ENCODE measurements at regions of chr9 and their contacts with region 1.

Region 1: GRCh38 chr9:20622330-20623020 is at the start of gene MLLT3:
- DNase-seq: peak; percentile 88
- ATAC-seq: peak; percentile 70
- H3K4me3 ChIP-seq: peak within 1 kb of the TSS; percentile 87
- H3K27ac ChIP-seq: peak within 1 kb of the TSS; percentile 45
- H3K4me1 ChIP-seq: peaks cover 26% of the 10 kb centered on the region
- H3K27me3 ChIP-seq: no peaks in the 10 kb centered on the region
- CTCF ChIP-seq: no peak
- total RNA-seq, gene MLLT3: 6.4 and 7.1 TPM in 2 replicates

Region 2: GRCh38 chr9:19925817-19926503 is 696.5 kb before region 1 on chr9:
- CTCF ChIA-PET with region 1: no interaction called
- POLR2A ChIA-PET with region 1: no interaction called
- intact Hi-C with region 1: loop called (anchors 5 kb)
- DNase-seq: peak; percentile 83
- ATAC-seq: peak; percentile 89
- H3K4me3 ChIP-seq: peak overlapping the region; percentile 44; the same call in 1 of the 2 replicates
- H3K27ac ChIP-seq: no peak overlapping the region
- H3K4me1 ChIP-seq: no peaks in the 10 kb centered on the region
- H3K27me3 ChIP-seq: no peaks in the 10 kb centered on the region
- CTCF ChIP-seq: peak; percentile 86

Region 3: DNA sequence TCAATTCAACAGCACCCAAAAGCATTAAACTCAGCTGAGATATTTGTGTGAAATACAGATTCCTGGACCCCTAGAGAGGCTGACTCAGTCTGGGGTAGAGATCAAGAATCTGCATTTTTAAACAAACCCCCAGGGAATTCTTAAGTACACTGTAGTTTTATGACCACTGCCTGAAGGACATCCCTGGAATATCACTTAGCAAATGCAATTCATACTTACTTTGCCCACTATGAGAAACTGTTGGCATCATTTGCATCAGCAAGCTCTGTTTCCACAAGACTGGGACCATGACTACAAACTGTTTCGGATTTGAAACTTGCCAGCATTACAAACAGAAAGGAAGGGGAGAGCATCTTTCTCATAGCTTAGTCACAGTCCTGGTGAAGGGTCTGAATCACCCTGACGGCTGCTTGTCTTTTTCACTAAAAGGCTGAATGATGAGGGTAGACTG is 63.9 kb before region 1 on chr9:
- CTCF ChIA-PET with region 1: no interaction called
- POLR2A ChIA-PET with region 1: interaction called, 16 read pairs
- intact Hi-C with region 1: loop called (anchors 2 kb)
- DNase-seq: peak; percentile 85
- ATAC-seq: peak; percentile 87
- H3K4me3 ChIP-seq: 0 out of 2 replicates have a peak overlapping the region, but pooled peaks have one; percentile 13
- H3K27ac ChIP-seq: peak overlapping the region; percentile 84
- H3K4me1 ChIP-seq: peaks cover 34% of the 10 kb centered on the region
- H3K27me3 ChIP-seq: no peaks in the 10 kb centered on the region
- CTCF ChIP-seq: no peak

Region 4: GRCh38 chr9:20684035-20684872 is 61.8 kb after region 1 on chr9 and contains the start of gene FOCAD:
- CTCF ChIA-PET with region 1: no interaction called
- POLR2A ChIA-PET with region 1: interaction called, 5 read pairs
- intact Hi-C with region 1: loop called (anchors 1 kb)
- DNase-seq: peak; percentile 93
- ATAC-seq: peak; percentile 98
- H3K4me3 ChIP-seq: peak within 1 kb of the TSS; percentile 92
- H3K27ac ChIP-seq: peak within 1 kb of the TSS; percentile 89
- H3K4me1 ChIP-seq: peaks cover 23% of the 10 kb centered on the region
- H3K27me3 ChIP-seq: no peaks in the 10 kb centered on the region
- CTCF ChIP-seq: no peak
- total RNA-seq, gene FOCAD: 35.1 and 38.4 TPM in 2 replicates

Region 5: DNA sequence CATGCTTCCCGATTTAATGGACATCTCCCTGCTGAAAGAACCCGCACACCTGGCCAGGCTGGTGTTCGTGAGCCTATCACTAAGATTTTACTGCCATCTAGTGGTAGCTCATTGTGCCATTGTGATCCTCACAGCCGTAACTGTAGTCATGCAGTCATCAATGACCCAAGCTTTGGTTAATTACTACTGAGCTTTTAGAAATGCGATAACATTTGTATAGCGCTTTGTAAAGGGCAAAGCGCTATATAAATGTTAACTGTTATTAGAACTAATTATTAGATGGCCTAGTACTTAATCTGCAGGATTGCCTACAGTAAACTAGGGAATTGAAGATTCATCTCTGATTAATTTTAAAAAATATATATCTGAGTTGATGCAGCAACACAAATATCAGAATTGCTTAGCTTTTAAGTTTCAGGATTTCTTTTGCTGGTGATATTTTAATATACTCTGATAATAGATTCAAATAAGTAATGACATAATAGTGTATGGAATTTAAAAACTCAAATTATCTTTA is 318.8 kb after region 1 on chr9:
- CTCF ChIA-PET with region 1: interaction called, 5 read pairs
- POLR2A ChIA-PET with region 1: no interaction called
- intact Hi-C with region 1: loop called (anchors 1 kb)
- DNase-seq: peak; percentile 79
- ATAC-seq: peak; percentile 98
- H3K4me3 ChIP-seq: no peak overlapping the region
- H3K27ac ChIP-seq: no peak overlapping the region
- H3K4me1 ChIP-seq: no peaks in the 10 kb centered on the region
- H3K27me3 ChIP-seq: no peaks in the 10 kb centered on the region
- CTCF ChIP-seq: peak; percentile 82

Region 6: DNA sequence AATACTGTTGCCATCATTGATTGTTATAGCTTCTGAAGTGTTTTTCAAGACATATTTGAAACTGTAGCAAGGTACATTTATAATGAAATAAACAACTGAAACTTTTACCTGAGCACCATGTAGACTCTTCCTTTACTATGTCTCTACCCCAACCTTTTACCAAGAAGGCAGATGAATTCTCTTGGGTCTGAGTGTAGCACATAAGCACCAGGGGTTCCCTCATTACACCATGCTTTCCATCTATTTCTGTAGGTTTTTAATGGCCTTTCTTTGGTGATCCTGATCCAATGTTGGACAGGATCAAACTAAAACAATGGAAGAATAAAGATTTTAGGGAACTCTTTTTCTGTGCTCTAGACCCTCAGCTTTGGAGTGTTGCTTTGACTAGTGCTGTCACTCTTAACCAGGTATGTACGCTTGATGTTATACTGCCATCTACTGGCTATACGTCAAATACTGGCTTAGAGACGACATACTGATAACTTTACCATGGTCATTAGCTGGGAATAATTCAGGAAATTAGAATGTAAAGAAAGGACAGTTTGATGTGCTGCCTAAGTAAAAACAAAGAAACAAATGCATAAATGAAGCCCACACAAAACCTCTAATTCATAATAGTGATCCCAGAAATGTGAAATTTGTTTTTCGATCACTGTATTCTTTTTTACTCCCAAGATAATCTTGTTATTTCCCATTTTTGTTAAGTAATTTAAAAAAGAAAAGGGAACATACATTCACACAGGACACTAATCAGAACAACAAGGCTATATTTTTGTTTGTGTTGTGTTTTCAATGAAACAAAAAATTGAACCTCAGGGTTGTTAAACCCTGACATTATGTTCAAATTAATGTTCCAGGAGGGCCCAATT is 488.5 kb after region 1 on chr9:
- CTCF ChIA-PET with region 1: interaction called, 3 read pairs
- POLR2A ChIA-PET with region 1: no interaction called
- intact Hi-C with region 1: loop called (anchors 1 kb)
- DNase-seq: peak; percentile 79
- ATAC-seq: peak; percentile 96
- H3K4me3 ChIP-seq: no peak overlapping the region
- H3K27ac ChIP-seq: no peak overlapping the region
- H3K4me1 ChIP-seq: no peaks in the 10 kb centered on the region
- H3K27me3 ChIP-seq: peaks cover 15% of the 10 kb centered on the region
- CTCF ChIP-seq: peak; percentile 78

Measured in PC-3 (cell line).